ENCODE measurements at regions of chr1 and their contacts with region 1.

Region 1: DNA sequence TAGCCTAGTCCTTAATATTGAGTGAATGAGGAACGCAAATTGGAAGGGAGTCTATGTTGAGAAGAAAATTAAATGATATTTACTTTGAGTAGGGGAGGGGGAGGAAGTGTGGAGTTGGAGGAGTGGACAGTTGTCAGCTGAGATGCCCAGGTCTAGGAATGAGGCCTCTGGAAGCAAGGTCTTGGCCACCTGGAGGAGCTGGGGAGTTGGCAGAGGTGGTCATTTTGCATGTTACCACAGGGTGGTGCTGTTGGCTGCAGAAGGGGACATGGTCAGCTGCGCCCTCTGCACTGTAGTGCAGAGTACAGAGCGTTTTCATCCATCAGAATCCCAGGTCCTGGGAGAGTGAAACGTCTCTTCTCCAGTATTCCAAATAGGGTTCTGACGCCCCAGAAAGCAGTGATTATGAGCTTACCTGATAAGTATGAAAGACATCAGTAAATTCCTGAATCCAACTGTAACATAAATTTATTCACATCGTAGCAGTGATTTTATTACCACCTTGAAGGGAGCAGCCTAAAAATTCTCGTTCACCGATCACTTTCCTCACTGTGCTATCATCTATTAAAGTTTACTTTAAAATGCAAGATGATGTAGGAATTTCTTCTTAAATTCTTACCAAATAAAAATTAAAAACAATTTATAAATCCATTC is 13.8 kb downstream of the PARK7 start:
- H3K4me3 ChIP-seq: no peak overlapping the region
- H3K27ac ChIP-seq: no peak overlapping the region
- H3K4me1 ChIP-seq: no peaks in the 10 kb centered on the region
- CTCF ChIP-seq: peak; percentile 99

Region 2: GRCh38 chr1:7646981-7647901 is 328.1 kb before region 1 on chr1:
- CTCF ChIA-PET with region 1: no interaction called
- POLR2A ChIA-PET with region 1: no interaction called
- H3K4me3 ChIP-seq: no peak overlapping the region
- H3K27ac ChIP-seq: no peak overlapping the region
- H3K4me1 ChIP-seq: no peaks in the 10 kb centered on the region
- CTCF ChIP-seq: peak; percentile 56

Region 3: DNA sequence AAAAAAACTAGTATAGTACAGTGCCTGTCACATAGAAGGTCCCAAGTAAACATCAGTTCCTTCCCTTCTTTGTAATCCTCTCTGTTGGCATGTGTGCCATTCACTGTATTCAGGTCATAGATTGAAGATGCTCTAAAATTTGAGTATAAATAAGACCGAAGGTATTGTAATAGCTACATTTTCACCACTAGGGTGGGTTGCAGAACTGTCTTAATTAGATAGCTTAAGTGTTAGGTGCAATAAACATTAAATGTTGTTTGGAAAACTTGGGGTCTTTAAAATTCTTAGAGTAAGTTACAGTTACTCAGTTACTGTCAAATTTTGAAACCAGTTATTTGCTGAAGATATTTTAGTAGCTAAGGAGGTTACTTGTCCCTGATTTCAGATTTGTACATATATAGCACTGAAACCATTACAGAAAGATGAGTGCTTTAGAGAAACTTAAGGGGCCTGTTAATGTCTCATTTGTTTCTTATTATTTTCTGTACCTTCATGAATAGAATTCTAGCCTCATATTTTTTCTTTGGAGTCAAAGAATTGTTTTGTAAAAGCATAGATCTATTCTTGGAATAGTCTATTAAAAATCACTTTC is 167.0 kb before region 1 on chr1:
- CTCF ChIA-PET with region 1: interaction called, 10 read pairs
- POLR2A ChIA-PET with region 1: no interaction called
- H3K4me3 ChIP-seq: no peak overlapping the region
- H3K27ac ChIP-seq: no peak overlapping the region
- H3K4me1 ChIP-seq: no peaks in the 10 kb centered on the region
- CTCF ChIP-seq: 0 out of 2 replicates have a peak, but pooled peaks have one; percentile 18

Region 4: DNA sequence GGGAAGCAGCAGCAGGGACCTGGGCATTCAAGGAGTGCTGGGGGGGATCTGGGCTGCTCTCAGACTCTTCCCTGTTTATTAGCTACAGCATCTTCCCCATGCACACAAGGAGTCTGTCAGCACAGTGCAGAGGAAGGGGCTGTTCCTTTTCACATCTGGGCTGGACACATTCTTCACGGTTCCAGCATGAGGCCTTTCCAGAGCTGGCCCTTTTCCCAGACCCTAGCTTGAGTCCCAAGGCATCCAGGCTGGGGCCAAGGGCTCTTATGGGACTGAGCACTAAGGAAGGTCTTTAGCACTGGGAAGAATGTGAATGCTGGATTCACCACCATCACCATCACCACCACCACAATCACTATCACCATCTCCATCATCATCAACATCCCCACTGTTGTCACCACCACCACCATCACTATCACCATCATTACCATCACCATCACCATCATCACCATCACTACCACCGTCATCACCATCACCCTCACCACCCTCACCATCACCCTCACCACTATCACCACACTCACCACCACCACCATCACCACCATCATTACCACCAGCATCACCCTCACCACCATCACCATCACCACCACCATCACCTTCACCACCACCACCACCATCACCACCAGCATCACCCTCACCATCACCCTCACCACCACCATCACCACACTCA is 14.6 kb after region 1 on chr1:
- CTCF ChIA-PET with region 1: interaction called, 15 read pairs
- POLR2A ChIA-PET with region 1: no interaction called
- H3K4me3 ChIP-seq: no peak overlapping the region
- H3K27ac ChIP-seq: no peak overlapping the region
- H3K4me1 ChIP-seq: no peaks in the 10 kb centered on the region
- CTCF ChIP-seq: no peak

Region 5: GRCh38 chr1:8015036-8015808 is 39.9 kb after region 1 on chr1:
- CTCF ChIA-PET with region 1: interaction called, 80 read pairs
- POLR2A ChIA-PET with region 1: no interaction called
- H3K4me3 ChIP-seq: no peak overlapping the region
- H3K27ac ChIP-seq: no peak overlapping the region
- H3K4me1 ChIP-seq: peaks cover 44% of the 10 kb centered on the region
- CTCF ChIP-seq: peak; percentile 42; the same call in 1 of the 2 replicates

Region 6: GRCh38 chr1:8302081-8302956 is 327.0 kb after region 1 on chr1:
- CTCF ChIA-PET with region 1: interaction called, 12 read pairs
- POLR2A ChIA-PET with region 1: no interaction called
- H3K4me3 ChIP-seq: no peak overlapping the region
- H3K27ac ChIP-seq: no peak overlapping the region
- H3K4me1 ChIP-seq: no peaks in the 10 kb centered on the region
- CTCF ChIP-seq: no peak

Region 7: DNA sequence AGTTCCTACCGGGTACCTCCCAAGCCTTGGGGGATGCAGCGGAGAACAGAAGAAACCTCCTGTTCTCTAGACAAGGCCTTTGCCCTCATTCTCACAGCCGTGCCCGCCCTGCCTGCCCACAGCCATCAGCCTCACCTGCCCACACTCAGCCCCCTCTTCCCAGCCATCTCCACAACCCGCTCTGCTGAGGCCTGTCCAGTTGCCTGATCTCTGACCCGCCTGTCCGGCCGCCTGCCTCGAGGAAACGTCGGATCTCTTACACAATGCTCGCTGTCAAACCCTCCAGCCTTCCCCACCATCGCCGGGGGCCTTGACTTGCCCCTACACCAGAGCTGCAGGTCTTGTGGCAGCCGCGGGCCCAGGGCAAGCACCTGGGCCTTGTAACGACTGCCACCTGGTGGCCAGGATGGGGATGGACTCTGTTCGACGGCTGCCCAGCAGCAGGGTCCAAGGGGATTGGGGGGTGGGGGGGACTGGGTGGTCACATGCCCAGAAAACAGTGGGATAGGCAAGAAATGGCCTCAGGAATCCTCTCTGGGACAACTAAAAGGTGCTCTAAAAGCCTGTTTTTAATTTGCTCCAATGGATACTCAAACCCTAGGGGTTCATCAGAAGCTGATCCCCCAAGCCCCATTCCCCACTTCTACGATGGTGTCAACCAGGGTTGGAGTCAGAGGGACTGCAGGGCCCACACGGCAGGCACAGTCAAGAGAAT is 373.6 kb after region 1 on chr1:
- CTCF ChIA-PET with region 1: interaction called, 13 read pairs
- POLR2A ChIA-PET with region 1: interaction called, 3 read pairs
- H3K4me3 ChIP-seq: no peak overlapping the region
- H3K27ac ChIP-seq: no peak overlapping the region
- H3K4me1 ChIP-seq: no peaks in the 10 kb centered on the region; the same call in 1 of the 2 replicates
- CTCF ChIP-seq: peak; percentile 72

Measured in HEK293 (cell line).